ENCODE measurements at regions of chr7 and their contacts with region 1.

Region 1: DNA sequence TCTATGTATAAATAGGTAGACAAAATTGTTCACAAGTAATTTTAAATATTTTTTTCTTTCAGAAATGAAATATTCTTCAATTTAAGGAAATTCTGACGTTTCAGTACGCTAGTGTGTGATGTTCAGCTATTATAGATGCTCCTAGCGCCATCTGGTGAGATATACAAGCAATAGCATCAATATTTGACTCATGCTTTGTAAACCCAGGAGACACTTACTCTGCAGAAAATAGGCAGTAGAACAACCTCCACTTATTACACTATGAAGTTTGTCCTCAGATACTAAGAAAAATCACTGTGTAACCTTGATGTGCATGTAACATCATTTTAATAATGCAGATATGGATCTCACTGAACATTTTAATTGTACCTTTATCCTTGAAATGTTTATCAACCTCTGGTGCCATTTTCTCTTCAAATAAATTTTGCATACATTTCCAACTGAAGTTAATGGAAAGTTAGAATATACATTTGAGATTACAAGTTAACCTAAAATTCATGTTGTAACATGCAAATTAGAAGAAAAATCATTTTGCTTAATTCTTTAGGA is 151.5 kb upstream of the FAM3C start:
- DNase-seq: no peak
- H3K4me3 ChIP-seq: peak overlapping the region in 6 of 59 donors; percentile 10 to 29 (median 24)
- H3K27ac ChIP-seq: no peak overlapping the region
- H3K27me3 ChIP-seq: no peaks in the 10 kb centered on the region
- CTCF ChIP-seq: peak; percentile 60 to 95 (median 80)

Region 2: GRCh38 chr7:121395961-121396757 is 151.5 kb before region 1 on chr7 and contains the start of gene FAM3C:
- intact Hi-C with region 1: loop called in 1 of 2 experiments (anchors 10 kb)
- DNase-seq: peak; percentile 73 to 96 (median 86)
- H3K4me3 ChIP-seq: peak within 1 kb of the TSS; percentile 59 to 98 (median 83)
- H3K27ac ChIP-seq: peak within 1 kb of the TSS in 58 of 59 donors; percentile 21 to 94 (median 78)
- H3K27me3 ChIP-seq: no peaks in the 10 kb centered on the region
- CTCF ChIP-seq: peak; percentile 69 to 99 (median 93)
- total RNA-seq, gene FAM3C: 41.3 to 176 (median 104) TPM